Heart right ventricle (tissue), 16 donors: ENCODE measurements at regions of chr1 and their contacts with region 1.

Region 1: DNA sequence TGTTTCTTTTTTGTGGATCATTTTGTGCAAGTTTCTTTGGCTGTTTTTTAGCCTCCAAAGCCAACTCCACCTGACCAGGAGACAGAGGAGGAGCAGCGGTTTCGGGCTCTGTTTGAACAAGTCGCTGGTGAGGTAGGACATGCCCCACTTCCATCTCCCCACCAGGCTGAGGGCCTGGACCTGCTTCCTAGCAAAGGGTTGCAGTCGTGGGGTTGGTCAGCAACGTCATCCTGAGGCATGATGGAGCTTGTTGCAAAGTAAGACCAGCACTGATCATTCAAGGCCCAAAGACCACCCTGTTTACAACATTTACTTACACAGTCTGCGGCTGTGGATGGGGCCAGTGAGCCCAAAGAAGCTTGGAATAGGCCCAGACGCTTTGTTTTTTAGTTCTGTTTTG is 40.3 kb downstream of the CAPN9 start:
- DNase-seq: no peak
- ATAC-seq: no peak
- H3K4me3 ChIP-seq: no peak overlapping the region
- H3K27ac ChIP-seq: no peak overlapping the region
- H3K4me1 ChIP-seq: no peaks in the 10 kb centered on the region
- H3K27me3 ChIP-seq: no peaks in the 10 kb centered on the region
- CTCF ChIP-seq: no peak

Region 2: GRCh38 chr1:230744382-230744781 is 43.1 kb before region 1 on chr1:
- intact Hi-C with region 1: loop called in 1 of 10 experiments (anchors 1 kb)
- DNase-seq: no peak
- ATAC-seq: no peak
- H3K4me3 ChIP-seq: no peak overlapping the region
- H3K27ac ChIP-seq: no peak overlapping the region
- H3K4me1 ChIP-seq: no peaks in the 10 kb centered on the region
- H3K27me3 ChIP-seq: no peaks in the 10 kb centered on the region
- CTCF ChIP-seq: no peak

Region 3: GRCh38 chr1:230827081-230827681 is 39.7 kb after region 1 on chr1:
- intact Hi-C with region 1: no loop called
- DNase-seq: peak; percentile 56 to 58
- ATAC-seq: peak in 7 of 8 donors; percentile 6 to 51 (median 38)
- H3K4me3 ChIP-seq: no peak overlapping the region
- H3K27ac ChIP-seq: peak overlapping the region in 6 of 10 donors; percentile 80 to 93 (median 89)
- H3K4me1 ChIP-seq: peaks cover 20 to 79% (median 68%) of the 10 kb centered on the region in 9 donors
- H3K27me3 ChIP-seq: no peaks in the 10 kb centered on the region
- CTCF ChIP-seq: no peak